ENCODE measurements at regions of chr1 and their contacts with region 1.

Region 1: GRCh38 chr1:228405987-228406265 is 709 bp downstream of the TRIM11 start:
- DNase-seq: no peak
- H3K4me3 ChIP-seq: peak overlapping the region; percentile 99
- H3K4me3 Mint-ChIP-seq: peak overlapping the region; percentile 95
- H3K27ac Mint-ChIP-seq: peak overlapping the region; percentile 93
- H3K4me1 ChIP-seq: peaks cover 26% of the 10 kb centered on the region
- H3K4me1 Mint-ChIP-seq: peaks cover 20% of the 10 kb centered on the region
- H3K27me3 ChIP-seq: no peaks in the 10 kb centered on the region
- H3K27me3 Mint-ChIP-seq: no peaks in the 10 kb centered on the region
- CTCF ChIP-seq: no peak

Region 2: DNA sequence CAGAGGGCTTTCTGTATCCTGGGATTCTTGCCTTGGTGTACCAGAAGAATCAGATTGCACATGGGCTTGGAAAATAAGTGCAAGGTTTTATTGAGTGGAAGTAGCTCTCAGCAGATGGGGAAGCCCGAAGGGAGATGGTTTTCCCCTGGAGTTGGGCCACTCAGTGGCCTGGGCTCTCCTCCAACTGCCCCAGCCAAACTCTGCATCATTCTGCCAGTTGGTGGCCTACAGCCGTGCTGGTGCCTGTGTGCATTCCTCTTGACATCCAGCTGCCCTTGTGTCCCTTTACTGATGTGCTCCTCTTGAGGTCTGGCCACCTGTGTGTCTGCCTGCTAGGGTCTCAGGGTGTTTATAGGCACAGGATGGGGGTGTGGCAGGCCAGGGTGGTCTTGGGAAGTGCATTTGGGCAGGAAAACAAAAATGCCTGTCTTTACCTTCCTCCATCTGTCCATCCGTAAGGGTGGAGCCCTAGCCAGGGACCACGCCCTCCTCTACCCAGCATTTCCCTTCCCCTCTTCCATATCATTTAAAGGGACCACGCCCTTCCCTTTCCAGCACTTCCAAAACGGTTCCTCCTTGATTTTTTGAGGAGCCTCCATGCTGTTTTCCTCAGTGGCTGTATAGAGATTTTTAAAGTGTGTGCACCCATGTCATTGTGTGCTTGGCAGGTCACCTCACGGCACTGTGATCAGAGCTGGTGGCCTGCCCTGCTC is 651.8 kb before region 1 on chr1:
- CTCF ChIA-PET with region 1: interaction called, 10 read pairs
- POLR2A ChIA-PET with region 1: no interaction called
- intact Hi-C with region 1: no loop called
- DNase-seq: no peak
- H3K4me3 ChIP-seq: no peak overlapping the region
- H3K4me3 Mint-ChIP-seq: no peak overlapping the region
- H3K27ac Mint-ChIP-seq: no peak overlapping the region
- H3K4me1 ChIP-seq: no peaks in the 10 kb centered on the region
- H3K4me1 Mint-ChIP-seq: no peaks in the 10 kb centered on the region
- H3K27me3 ChIP-seq: no peaks in the 10 kb centered on the region
- H3K27me3 Mint-ChIP-seq: no peaks in the 10 kb centered on the region
- CTCF ChIP-seq: no peak

Region 3: DNA sequence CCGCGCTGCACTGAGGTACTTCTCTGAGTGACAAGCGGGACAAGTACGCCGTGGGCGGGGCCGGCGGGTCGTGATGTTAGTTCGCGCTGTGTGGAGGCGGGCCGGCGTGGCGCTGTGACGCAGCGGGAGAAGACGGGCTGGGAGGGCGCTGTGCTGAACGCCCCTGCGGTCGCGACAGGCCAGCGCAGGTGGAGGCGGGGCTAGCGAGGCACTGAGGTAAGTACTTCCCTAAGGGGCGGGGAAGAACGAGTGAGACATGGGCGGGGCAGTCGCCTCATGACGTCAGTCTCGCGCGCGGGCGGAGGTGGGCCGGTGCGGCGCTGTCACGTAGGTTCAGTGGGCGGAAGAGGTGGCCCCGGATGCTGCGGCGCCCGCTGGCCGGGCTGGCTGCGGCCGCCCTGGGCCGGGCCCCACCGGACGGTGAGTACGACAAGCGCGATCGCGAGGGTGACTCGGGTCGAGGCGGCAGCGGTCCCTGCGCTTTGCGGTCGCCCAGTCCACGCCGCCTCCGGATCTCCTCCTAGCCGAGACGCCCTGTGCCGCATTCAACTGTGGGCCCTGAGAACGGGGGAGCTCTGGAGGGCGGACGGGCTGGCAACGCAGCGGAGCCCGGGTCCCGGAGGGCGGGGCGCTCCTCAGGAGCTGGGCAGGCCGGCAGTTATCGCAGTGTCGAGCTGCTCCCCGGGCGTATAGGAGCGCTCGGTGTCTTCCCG is 265.8 kb before region 1 on chr1 and contains the start of gene GUK1:
- CTCF ChIA-PET with region 1: no interaction called
- POLR2A ChIA-PET with region 1: interaction called, 10 read pairs
- intact Hi-C with region 1: no loop called
- DNase-seq: peak; percentile 100
- H3K4me3 ChIP-seq: peak within 1 kb of the TSS; percentile 90
- H3K4me3 Mint-ChIP-seq: peak within 1 kb of the TSS; percentile 85
- H3K27ac Mint-ChIP-seq: peak within 1 kb of the TSS; percentile 91
- H3K4me1 ChIP-seq: peaks cover 5% of the 10 kb centered on the region
- H3K4me1 Mint-ChIP-seq: no peaks in the 10 kb centered on the region
- H3K27me3 ChIP-seq: no peaks in the 10 kb centered on the region
- H3K27me3 Mint-ChIP-seq: no peaks in the 10 kb centered on the region
- CTCF ChIP-seq: peak in 1 of 2 experiments; percentile 23
- total RNA-seq, gene GUK1: 73.6 and 74.4 TPM in 2 replicates

Region 4: GRCh38 chr1:228393248-228393699 is 12.7 kb before region 1 on chr1:
- CTCF ChIA-PET with region 1: interaction called, 6 read pairs
- POLR2A ChIA-PET with region 1: interaction called, 17 read pairs
- intact Hi-C with region 1: no loop called
- DNase-seq: peak; percentile 35 to 36
- H3K4me3 ChIP-seq: no peak overlapping the region
- H3K4me3 Mint-ChIP-seq: no peak overlapping the region
- H3K27ac Mint-ChIP-seq: no peak overlapping the region
- H3K4me1 ChIP-seq: no peaks in the 10 kb centered on the region
- H3K4me1 Mint-ChIP-seq: no peaks in the 10 kb centered on the region
- H3K27me3 ChIP-seq: no peaks in the 10 kb centered on the region
- H3K27me3 Mint-ChIP-seq: no peaks in the 10 kb centered on the region
- CTCF ChIP-seq: peak; percentile 26 to 34

Region 5: GRCh38 chr1:228434686-228435085 is 28.8 kb after region 1 on chr1:
- CTCF ChIA-PET with region 1: interaction called, 7 read pairs
- POLR2A ChIA-PET with region 1: interaction called, 31 read pairs
- intact Hi-C with region 1: loop called (anchors 1 kb)
- DNase-seq: no peak
- H3K4me3 ChIP-seq: no peak overlapping the region
- H3K4me3 Mint-ChIP-seq: no peak overlapping the region
- H3K27ac Mint-ChIP-seq: peak overlapping the region; percentile 94
- H3K4me1 ChIP-seq: peaks cover 36% of the 10 kb centered on the region
- H3K4me1 Mint-ChIP-seq: peaks cover 26% of the 10 kb centered on the region
- H3K27me3 ChIP-seq: no peaks in the 10 kb centered on the region
- H3K27me3 Mint-ChIP-seq: no peaks in the 10 kb centered on the region
- CTCF ChIP-seq: no peak